Gastrocnemius medialis (tissue), 4 donors: ENCODE measurements at regions of chr22 and their contacts with region 1.

Region 1: GRCh38 chr22:19941365-19942082 is at the starts of genes COMT and TXNRD2:
- DNase-seq: peak; percentile 49 to 64
- ATAC-seq: peak; percentile 63 to 67
- H3K4me3 ChIP-seq: peak within 1 kb of the TSS; percentile 61 to 84 (median 76)
- H3K27ac ChIP-seq: peak within 1 kb of the TSS; percentile 91 to 97 (median 96)
- H3K4me1 ChIP-seq: peaks cover 40 to 45% of the 10 kb centered on the region in 2 donors
- H3K27me3 ChIP-seq: no peaks in the 10 kb centered on the region
- CTCF ChIP-seq: no peak
- POLR2A ChIP-seq: peak; percentile 43 to 55
- total RNA-seq, gene COMT: 154 to 255 (median 223) TPM
- total RNA-seq, gene TXNRD2: 9.0 to 18.0 (median 14.4) TPM

Region 2: DNA sequence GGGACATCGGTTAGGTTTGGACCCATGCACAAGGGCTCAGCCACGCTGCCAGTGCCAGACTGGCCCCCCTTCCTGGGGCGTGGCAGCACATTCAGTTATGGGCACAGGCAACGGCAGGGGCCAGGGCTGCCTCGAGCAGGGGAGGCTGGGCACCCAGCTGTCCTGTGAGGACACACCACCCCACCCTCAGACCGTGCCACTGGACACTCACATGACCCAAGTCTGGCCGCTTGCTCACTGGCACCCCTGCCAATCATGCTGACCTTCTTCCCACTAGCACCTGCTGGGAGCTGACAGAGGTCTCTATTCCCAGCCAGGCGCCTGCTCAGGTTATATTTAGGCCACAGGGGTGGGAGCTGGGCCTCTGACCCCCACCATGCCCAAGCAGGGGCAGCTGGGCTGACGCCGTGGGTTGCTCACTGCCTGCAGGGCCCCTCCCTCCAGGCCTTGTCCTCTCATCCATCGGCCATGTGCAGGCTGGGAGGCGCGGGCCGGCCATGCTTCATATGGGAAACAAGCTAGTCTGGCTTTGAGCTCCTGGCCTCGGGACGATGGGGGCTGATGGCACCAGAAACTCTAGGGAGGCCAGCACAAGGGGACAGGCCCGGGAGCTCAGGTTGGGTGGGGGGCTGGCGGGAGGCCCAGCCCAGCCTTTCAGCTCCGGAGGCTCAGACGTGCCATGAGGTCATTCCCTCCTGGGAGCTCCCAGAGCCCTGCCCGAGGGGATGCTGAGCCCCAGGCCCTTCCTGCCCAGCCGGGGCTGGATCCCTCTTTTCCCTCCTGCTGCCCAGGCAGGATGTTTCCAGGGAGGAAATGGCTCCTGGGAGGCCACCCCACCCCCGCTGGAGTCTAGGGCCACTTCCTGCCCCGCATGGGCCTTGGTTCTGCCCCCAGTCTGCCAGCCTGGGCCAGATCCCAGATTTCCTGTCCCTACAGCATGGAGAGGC is 196.1 kb before region 1 on chr22:
- in situ Hi-C with region 1: no loop called
- intact Hi-C with region 1: loop called (anchors 1 kb)
- DNase-seq: peak; percentile 97 to 99
- ATAC-seq: peak; percentile 86 to 88
- H3K4me3 ChIP-seq: peak overlapping the region in 1 of 4 donors; percentile 2
- H3K27ac ChIP-seq: peak overlapping the region; percentile 85 to 98 (median 90)
- H3K4me1 ChIP-seq: peaks cover 19 to 36% of the 10 kb centered on the region in 2 donors
- H3K27me3 ChIP-seq: no peaks in the 10 kb centered on the region
- CTCF ChIP-seq: peak in 1 of 5 experiments; percentile 47
- POLR2A ChIP-seq: peak; percentile 55 to 57

Region 3: GRCh38 chr22:19820628-19821522 is 120.6 kb before region 1 on chr22:
- in situ Hi-C with region 1: no loop called
- intact Hi-C with region 1: no loop called
- DNase-seq: no peak
- ATAC-seq: no peak
- H3K4me3 ChIP-seq: no peak overlapping the region
- H3K27ac ChIP-seq: no peak overlapping the region
- H3K4me1 ChIP-seq: peaks cover under 1 to 3% of the 10 kb centered on the region in 2 donors
- H3K27me3 ChIP-seq: no peaks in the 10 kb centered on the region
- CTCF ChIP-seq: no peak
- POLR2A ChIP-seq: no peak

Region 4: DNA sequence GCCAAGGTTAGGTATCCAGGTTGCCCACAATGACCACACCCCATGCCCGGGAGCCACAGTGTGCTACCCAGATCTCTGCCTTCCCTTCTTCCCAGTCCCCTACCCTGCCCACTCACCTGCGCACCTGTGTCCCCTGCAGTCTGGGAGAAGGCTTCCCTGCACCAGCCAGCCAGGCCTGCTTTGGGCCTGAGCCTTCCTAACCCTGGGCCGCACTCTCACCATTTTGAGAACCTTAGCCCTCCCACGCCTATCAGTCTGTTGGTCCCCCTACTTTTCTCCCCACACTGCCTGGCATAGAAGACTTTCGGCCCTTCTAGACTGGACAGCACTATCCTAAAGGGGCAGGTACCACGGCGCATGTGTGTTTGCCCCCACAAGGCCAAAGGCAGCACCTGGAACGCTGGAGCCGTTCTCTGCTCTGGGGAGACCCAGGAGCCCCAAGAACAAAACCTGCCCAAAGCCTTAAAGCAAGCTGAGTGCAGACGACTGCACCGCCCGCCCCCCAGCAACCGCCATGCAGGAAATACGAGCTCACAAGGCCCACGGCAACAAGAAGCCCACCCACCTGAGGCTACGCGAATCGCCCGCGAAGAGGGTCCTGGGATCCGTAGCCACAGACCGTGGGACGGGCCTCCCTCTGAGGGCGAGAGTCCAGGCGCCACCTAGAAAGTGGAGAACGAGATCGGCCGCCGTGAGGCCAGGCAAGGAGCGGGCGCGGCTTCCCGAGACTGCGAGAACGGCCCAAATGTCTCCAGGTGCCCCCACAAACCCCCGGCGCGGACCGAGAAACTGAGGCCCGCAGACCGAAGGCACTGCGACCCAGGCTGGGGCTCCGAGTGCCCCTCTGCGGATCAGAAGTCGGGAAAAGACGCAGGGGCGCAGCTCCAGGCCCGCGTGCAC is 87.4 kb before region 1 on chr22:
- in situ Hi-C with region 1: no loop called
- intact Hi-C with region 1: no loop called
- DNase-seq: no peak
- ATAC-seq: peak; percentile 14 to 18
- H3K4me3 ChIP-seq: peak overlapping the region; percentile 85 to 98 (median 94)
- H3K27ac ChIP-seq: peak overlapping the region; percentile 91 to 98 (median 96)
- H3K4me1 ChIP-seq: peaks cover 24 to 34% of the 10 kb centered on the region in 2 donors
- H3K27me3 ChIP-seq: no peaks in the 10 kb centered on the region
- CTCF ChIP-seq: no peak
- POLR2A ChIP-seq: no peak

Region 5: GRCh38 chr22:19916941-19917340 is 24.6 kb before region 1 on chr22:
- in situ Hi-C with region 1: no loop called
- intact Hi-C with region 1: loop called (anchors 2 kb)
- DNase-seq: no peak
- ATAC-seq: no peak
- H3K4me3 ChIP-seq: no peak overlapping the region
- H3K27ac ChIP-seq: peak overlapping the region; percentile 13 to 80 (median 70)
- H3K4me1 ChIP-seq: no peaks in the 10 kb centered on the region
- H3K27me3 ChIP-seq: no peaks in the 10 kb centered on the region
- CTCF ChIP-seq: no peak
- POLR2A ChIP-seq: no peak

Region 6: DNA sequence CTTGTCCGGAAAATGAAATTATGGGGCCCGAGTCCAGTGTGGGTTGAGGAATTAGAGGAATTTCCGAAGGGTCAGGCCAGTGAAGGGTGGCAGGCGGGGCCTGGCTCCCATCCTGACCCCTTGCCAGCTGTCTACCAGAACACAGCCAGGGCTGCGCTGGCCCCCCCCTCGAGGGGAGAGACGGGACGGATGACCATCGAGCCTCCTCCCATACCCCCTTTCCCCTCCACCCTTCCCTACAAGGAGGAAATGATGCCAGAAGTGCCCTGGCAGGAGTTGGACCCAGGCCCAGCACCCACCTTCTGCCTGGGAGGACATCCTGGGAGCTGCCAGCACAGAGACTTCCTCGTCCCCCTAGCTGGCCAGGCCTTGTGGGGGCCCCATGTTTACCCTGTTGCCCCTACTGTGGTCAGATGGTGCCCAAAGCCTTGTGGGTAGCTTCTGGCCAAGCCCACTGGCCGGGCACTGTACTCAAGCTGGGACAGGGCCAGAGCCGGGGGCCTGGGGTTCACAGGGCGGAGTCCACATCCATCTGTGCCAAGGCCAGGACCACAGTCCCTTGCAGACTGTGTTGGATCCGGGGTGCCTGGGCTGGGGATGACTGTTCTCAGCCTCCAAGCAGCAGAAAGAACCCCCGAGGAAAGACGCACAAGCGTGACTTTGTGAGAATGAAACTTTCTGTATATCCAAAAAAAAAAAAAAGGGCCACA is 54.3 kb after region 1 on chr22:
- in situ Hi-C with region 1: no loop called
- intact Hi-C with region 1: no loop called
- DNase-seq: no peak
- ATAC-seq: peak in 1 of 2 donors; percentile 22
- H3K4me3 ChIP-seq: no peak overlapping the region
- H3K27ac ChIP-seq: no peak overlapping the region
- H3K4me1 ChIP-seq: peaks cover 10 to 30% of the 10 kb centered on the region in 2 donors
- H3K27me3 ChIP-seq: no peaks in the 10 kb centered on the region
- CTCF ChIP-seq: no peak
- POLR2A ChIP-seq: no peak